ENCODE measurements at regions of chr1 and their contacts with region 1.

Region 1: DNA sequence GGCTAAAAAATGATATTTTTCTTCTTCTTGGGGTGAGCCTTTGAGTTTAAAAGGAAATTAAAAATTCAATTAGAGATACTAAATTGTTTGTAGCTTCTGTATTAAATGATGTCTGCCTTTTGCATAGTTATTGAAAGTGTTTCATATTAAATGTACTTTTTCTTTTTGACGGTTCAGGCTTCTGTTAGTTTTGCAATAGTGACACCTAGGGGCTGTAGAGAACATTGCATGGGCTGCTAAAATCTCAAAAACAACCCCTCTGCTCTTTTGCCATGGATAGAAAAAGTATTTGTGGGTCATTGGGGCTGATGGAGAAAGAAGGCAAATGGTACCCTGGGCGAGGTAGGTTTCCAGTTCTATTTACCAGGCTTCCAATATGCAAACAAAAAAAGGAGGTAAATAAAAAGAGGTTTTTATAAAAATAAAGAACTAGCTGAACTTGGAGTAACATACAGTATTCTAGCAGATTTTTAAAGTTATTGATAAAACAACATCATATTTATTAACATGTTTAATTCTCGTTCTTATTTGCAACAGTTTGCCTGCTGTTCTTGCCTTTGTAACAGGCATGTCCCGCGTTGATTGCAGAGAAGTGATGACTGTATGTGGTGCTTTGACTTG is 115.4 kb upstream of the HOOK1 start:
- DNase-seq: peak; percentile 57
- ATAC-seq: 0 out of 2 replicates have a peak, but pooled peaks have one; percentile 19
- H3K4me3 ChIP-seq: no peak overlapping the region
- H3K27ac ChIP-seq: no peak overlapping the region
- H3K4me1 ChIP-seq: peaks cover 21% of the 10 kb centered on the region
- H3K27me3 ChIP-seq: no peaks in the 10 kb centered on the region
- CTCF ChIP-seq: peak; percentile 91
- POLR2A ChIP-seq: 0 out of 2 replicates have a peak, but pooled peaks have one; percentile 35
- RAD21 ChIP-seq: peak; percentile 97

Region 2: GRCh38 chr1:58739856-58740466 is 959.4 kb before region 1 on chr1:
- CTCF ChIA-PET with region 1: interaction called, 3 read pairs
- POLR2A ChIA-PET with region 1: no interaction called
- dilution Hi-C with region 1: no loop called
- in situ Hi-C with region 1: no loop called
- intact Hi-C with region 1: loop called (anchors 1 kb)
- DNase-seq: peak; percentile 71
- ATAC-seq: peak; percentile 64; the same call in 1 of the 2 replicates
- H3K4me3 ChIP-seq: no peak overlapping the region
- H3K27ac ChIP-seq: no peak overlapping the region
- H3K4me1 ChIP-seq: no peaks in the 10 kb centered on the region
- H3K27me3 ChIP-seq: no peaks in the 10 kb centered on the region
- CTCF ChIP-seq: peak; percentile 93
- POLR2A ChIP-seq: no peak
- RAD21 ChIP-seq: peak; percentile 94

Region 3: GRCh38 chr1:59296358-59297256 is 402.7 kb before region 1 on chr1 and contains the start of gene FGGY:
- CTCF ChIA-PET with region 1: interaction called, 3 read pairs
- POLR2A ChIA-PET with region 1: no interaction called
- dilution Hi-C with region 1: no loop called
- in situ Hi-C with region 1: no loop called
- intact Hi-C with region 1: loop called (anchors 2 kb)
- DNase-seq: peak; percentile 98
- ATAC-seq: peak; percentile 93
- H3K4me3 ChIP-seq: peak within 1 kb of the TSS; percentile 74
- H3K27ac ChIP-seq: peak within 1 kb of the TSS; percentile 99
- H3K4me1 ChIP-seq: peaks cover 6% of the 10 kb centered on the region
- H3K27me3 ChIP-seq: no peaks in the 10 kb centered on the region
- CTCF ChIP-seq: no peak
- POLR2A ChIP-seq: peak; percentile 84
- RAD21 ChIP-seq: peak; percentile 29; the same call in 1 of the 2 replicates
- total RNA-seq, gene FGGY: 12.8 and 14.0 TPM in 2 replicates

Region 4: GRCh38 chr1:59316497-59317128 is 382.7 kb before region 1 on chr1:
- CTCF ChIA-PET with region 1: no interaction called
- POLR2A ChIA-PET with region 1: no interaction called
- dilution Hi-C with region 1: no loop called
- in situ Hi-C with region 1: no loop called
- intact Hi-C with region 1: loop called (anchors 5 kb)
- DNase-seq: peak; percentile 70
- ATAC-seq: peak; percentile 93
- H3K4me3 ChIP-seq: peak overlapping the region; percentile 12; the same call in 1 of the 2 replicates
- H3K27ac ChIP-seq: peak overlapping the region; percentile 45; the same call in 1 of the 2 replicates
- H3K4me1 ChIP-seq: peaks cover 7% of the 10 kb centered on the region
- H3K27me3 ChIP-seq: no peaks in the 10 kb centered on the region
- CTCF ChIP-seq: no peak
- POLR2A ChIP-seq: no peak
- RAD21 ChIP-seq: no peak

Region 5: GRCh38 chr1:59367301-59368007 is 331.9 kb before region 1 on chr1:
- CTCF ChIA-PET with region 1: interaction called, 3 read pairs
- POLR2A ChIA-PET with region 1: no interaction called
- dilution Hi-C with region 1: no loop called
- in situ Hi-C with region 1: no loop called
- intact Hi-C with region 1: loop called (anchors 5 kb)
- DNase-seq: peak; percentile 94
- ATAC-seq: peak; percentile 96
- H3K4me3 ChIP-seq: no peak overlapping the region
- H3K27ac ChIP-seq: peak overlapping the region; percentile 81
- H3K4me1 ChIP-seq: peaks cover 14% of the 10 kb centered on the region
- H3K27me3 ChIP-seq: no peaks in the 10 kb centered on the region
- CTCF ChIP-seq: no peak
- POLR2A ChIP-seq: no peak
- RAD21 ChIP-seq: no peak; the same call in 1 of the 2 replicates

Region 6: GRCh38 chr1:59484096-59484495 is 215.2 kb before region 1 on chr1:
- CTCF ChIA-PET with region 1: no interaction called
- POLR2A ChIA-PET with region 1: no interaction called
- dilution Hi-C with region 1: no loop called
- in situ Hi-C with region 1: no loop called
- intact Hi-C with region 1: loop called (anchors 5 kb)
- DNase-seq: peak; percentile 94
- ATAC-seq: peak; percentile 84
- H3K4me3 ChIP-seq: no peak overlapping the region
- H3K27ac ChIP-seq: peak overlapping the region; percentile 36; the same call in 1 of the 2 replicates
- H3K4me1 ChIP-seq: peaks cover 7% of the 10 kb centered on the region; the same call in 1 of the 2 replicates
- H3K27me3 ChIP-seq: no peaks in the 10 kb centered on the region
- CTCF ChIP-seq: no peak
- POLR2A ChIP-seq: no peak
- RAD21 ChIP-seq: no peak

Region 7: GRCh38 chr1:59653968-59654367 is 45.4 kb before region 1 on chr1:
- CTCF ChIA-PET with region 1: no interaction called
- POLR2A ChIA-PET with region 1: no interaction called
- dilution Hi-C with region 1: no loop called
- in situ Hi-C with region 1: no loop called
- intact Hi-C with region 1: no loop called
- DNase-seq: no peak
- ATAC-seq: no peak
- H3K4me3 ChIP-seq: no peak overlapping the region
- H3K27ac ChIP-seq: no peak overlapping the region
- H3K4me1 ChIP-seq: no peaks in the 10 kb centered on the region
- H3K27me3 ChIP-seq: no peaks in the 10 kb centered on the region
- CTCF ChIP-seq: no peak
- POLR2A ChIP-seq: no peak
- RAD21 ChIP-seq: no peak

Region 8: GRCh38 chr1:59903141-59903754 is 203.9 kb after region 1 on chr1:
- CTCF ChIA-PET with region 1: no interaction called
- POLR2A ChIA-PET with region 1: no interaction called
- dilution Hi-C with region 1: no loop called
- in situ Hi-C with region 1: no loop called
- intact Hi-C with region 1: no loop called
- DNase-seq: no peak
- ATAC-seq: peak; percentile 56; the same call in 1 of the 2 replicates
- H3K4me3 ChIP-seq: no peak overlapping the region
- H3K27ac ChIP-seq: no peak overlapping the region
- H3K4me1 ChIP-seq: no peaks in the 10 kb centered on the region
- H3K27me3 ChIP-seq: no peaks in the 10 kb centered on the region
- CTCF ChIP-seq: peak; percentile 23; the same call in 1 of the 2 replicates
- POLR2A ChIP-seq: no peak
- RAD21 ChIP-seq: no peak

Region 9: DNA sequence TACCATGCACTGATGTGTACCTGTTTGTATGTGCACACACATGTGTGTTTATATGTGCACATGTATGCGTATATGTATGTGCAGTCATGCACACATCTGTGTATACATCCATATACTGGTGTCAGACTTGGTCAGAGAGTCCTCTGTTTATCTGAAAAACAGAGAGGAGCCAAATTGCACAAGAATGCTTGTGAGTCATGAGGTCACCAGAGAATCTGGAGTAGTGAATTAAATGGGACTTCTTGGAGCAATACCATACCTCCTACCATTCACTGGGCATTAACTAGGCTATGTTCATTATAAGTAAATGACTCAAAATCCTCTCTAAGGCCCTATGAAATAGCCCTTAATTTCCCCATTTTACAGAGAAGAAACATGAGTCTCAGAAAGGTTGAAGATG is 646.3 kb after region 1 on chr1:
- CTCF ChIA-PET with region 1: no interaction called
- POLR2A ChIA-PET with region 1: no interaction called
- dilution Hi-C with region 1: no loop called
- in situ Hi-C with region 1: no loop called
- intact Hi-C with region 1: no loop called
- DNase-seq: no peak
- ATAC-seq: no peak
- H3K4me3 ChIP-seq: no peak overlapping the region
- H3K27ac ChIP-seq: no peak overlapping the region
- H3K4me1 ChIP-seq: no peaks in the 10 kb centered on the region
- H3K27me3 ChIP-seq: no peaks in the 10 kb centered on the region
- CTCF ChIP-seq: no peak
- POLR2A ChIP-seq: no peak
- RAD21 ChIP-seq: no peak